IMR-90 (cell line): ENCODE measurements at regions of chr7 and their contacts with region 1.

Region 1: DNA sequence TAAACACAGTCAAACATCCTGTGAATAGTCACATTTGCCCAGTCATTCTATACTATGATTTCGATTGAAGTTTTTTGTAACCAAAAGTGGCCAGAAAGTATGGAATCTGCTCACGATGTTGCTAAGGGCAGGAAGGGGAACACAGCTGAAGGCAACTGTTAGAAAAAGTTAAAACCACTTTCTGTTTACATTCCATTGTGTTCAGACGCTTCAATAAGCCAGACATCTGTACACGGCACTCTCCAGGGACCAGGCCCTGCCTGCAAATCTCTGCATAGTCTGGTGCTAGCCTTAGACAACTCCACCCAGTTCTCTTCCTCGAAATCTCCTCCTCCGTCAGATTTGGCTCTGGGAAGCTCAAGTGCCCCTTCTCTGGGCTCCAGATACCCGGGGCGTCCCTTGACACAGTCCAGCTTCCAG is 17.1 kb upstream of the TMEM120A start:
- DNase-seq: peak; percentile 90
- ATAC-seq: peak; percentile 96
- H3K4me3 ChIP-seq: no peak overlapping the region
- H3K27ac ChIP-seq: peak overlapping the region; percentile 60
- H3K4me1 ChIP-seq: peaks cover 20% of the 10 kb centered on the region
- H3K27me3 ChIP-seq: no peaks in the 10 kb centered on the region
- CTCF ChIP-seq: no peak
- POLR2A ChIP-seq: no peak
- RAD21 ChIP-seq: no peak

Region 2: GRCh38 chr7:75776295-75776971 is 235.0 kb before region 1 on chr7:
- CTCF ChIA-PET with region 1: no interaction called
- POLR2A ChIA-PET with region 1: no interaction called
- dilution Hi-C with region 1: no loop called
- in situ Hi-C with region 1: no loop called
- intact Hi-C with region 1: loop called (anchors 5 kb)
- DNase-seq: peak; percentile 89
- ATAC-seq: peak; percentile 50
- H3K4me3 ChIP-seq: no peak overlapping the region
- H3K27ac ChIP-seq: no peak overlapping the region
- H3K4me1 ChIP-seq: peaks cover 3% of the 10 kb centered on the region; the same call in 1 of the 2 replicates
- H3K27me3 ChIP-seq: peaks cover 24% of the 10 kb centered on the region
- CTCF ChIP-seq: peak; percentile 29
- POLR2A ChIP-seq: no peak
- RAD21 ChIP-seq: peak; percentile 27; the same call in 1 of the 2 replicates

Region 3: DNA sequence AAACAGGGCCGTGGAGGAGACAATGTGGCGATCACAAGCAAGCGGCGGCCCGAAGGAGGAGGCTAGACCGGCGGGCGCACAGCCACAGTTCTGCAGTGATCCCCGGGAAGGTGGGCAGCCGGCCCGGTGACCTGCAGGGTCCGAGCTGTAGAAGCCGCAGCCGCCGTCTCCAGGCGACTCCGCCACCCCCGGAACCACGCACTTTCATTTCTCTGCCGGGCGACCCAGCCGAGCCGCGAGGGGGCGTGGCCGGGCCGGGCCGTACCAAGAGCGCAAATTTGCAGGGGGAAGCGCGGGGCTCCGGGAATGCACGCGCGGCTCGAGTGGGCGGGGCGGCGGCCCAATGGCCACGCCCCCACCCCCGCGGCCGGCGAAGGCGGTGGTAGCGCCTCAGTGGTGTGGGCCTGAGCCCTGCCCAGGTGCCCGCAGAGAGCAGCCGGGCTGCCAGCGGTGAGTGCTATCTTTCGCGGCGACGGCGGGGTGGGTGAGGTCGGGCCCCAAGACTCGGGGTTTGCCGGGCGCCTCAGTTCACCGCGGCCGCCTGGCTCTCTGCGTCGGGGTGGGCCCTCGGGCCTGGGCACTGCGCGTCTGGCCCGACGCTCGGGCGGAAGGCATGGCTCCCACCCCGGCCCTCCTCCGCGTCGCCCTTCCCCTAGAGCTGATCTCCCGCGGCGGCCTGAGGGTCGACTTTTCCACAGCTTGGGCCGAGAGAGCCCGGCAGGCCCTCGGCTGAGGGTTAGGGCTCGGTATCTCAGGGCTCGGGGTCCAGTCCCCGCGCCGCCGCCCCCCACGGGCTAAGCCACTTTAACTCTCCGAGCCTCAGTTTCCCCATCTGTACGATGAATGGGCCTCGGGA is 96.5 kb before region 1 on chr7 and contains the start of gene POR:
- CTCF ChIA-PET with region 1: no interaction called
- POLR2A ChIA-PET with region 1: no interaction called
- dilution Hi-C with region 1: no loop called
- in situ Hi-C with region 1: no loop called
- intact Hi-C with region 1: loop called (anchors 10 kb)
- DNase-seq: peak; percentile 88
- ATAC-seq: peak; percentile 99
- H3K4me3 ChIP-seq: peak within 1 kb of the TSS; percentile 78
- H3K27ac ChIP-seq: peak within 1 kb of the TSS; percentile 86
- H3K4me1 ChIP-seq: peaks cover 2% of the 10 kb centered on the region
- H3K27me3 ChIP-seq: no peaks in the 10 kb centered on the region
- CTCF ChIP-seq: no peak
- POLR2A ChIP-seq: peak; percentile 99
- RAD21 ChIP-seq: peak; percentile 3; the same call in 1 of the 2 replicates
- total RNA-seq, gene POR: 25.3 and 25.5 TPM in 2 replicates

Region 4: GRCh38 chr7:75928331-75928909 is 83.0 kb before region 1 on chr7:
- CTCF ChIA-PET with region 1: no interaction called
- POLR2A ChIA-PET with region 1: interaction called, 15 read pairs
- dilution Hi-C with region 1: no loop called
- in situ Hi-C with region 1: no loop called
- intact Hi-C with region 1: no loop called
- DNase-seq: no peak
- ATAC-seq: no peak
- H3K4me3 ChIP-seq: no peak overlapping the region
- H3K27ac ChIP-seq: no peak overlapping the region
- H3K4me1 ChIP-seq: no peaks in the 10 kb centered on the region
- H3K27me3 ChIP-seq: no peaks in the 10 kb centered on the region
- CTCF ChIP-seq: no peak
- POLR2A ChIP-seq: no peak
- RAD21 ChIP-seq: no peak

Region 5: GRCh38 chr7:76220185-76221057 is 209.0 kb after region 1 on chr7:
- CTCF ChIA-PET with region 1: no interaction called
- POLR2A ChIA-PET with region 1: no interaction called
- dilution Hi-C with region 1: no loop called
- in situ Hi-C with region 1: no loop called
- intact Hi-C with region 1: no loop called
- DNase-seq: peak; percentile 30
- ATAC-seq: peak; percentile 60
- H3K4me3 ChIP-seq: no peak overlapping the region
- H3K27ac ChIP-seq: no peak overlapping the region
- H3K4me1 ChIP-seq: peaks cover 2% of the 10 kb centered on the region; the same call in 1 of the 2 replicates
- H3K27me3 ChIP-seq: peaks cover 36% of the 10 kb centered on the region
- CTCF ChIP-seq: 0 out of 2 replicates have a peak, but pooled peaks have one; percentile 16
- POLR2A ChIP-seq: no peak
- RAD21 ChIP-seq: no peak